AG04449 (cell line): ENCODE measurements at regions of chr5 and their contacts with region 1.

Region 1: GRCh38 chr5:43631182-43631910 is 28.4 kb downstream of the NNT start:
- DNase-seq: peak; percentile 51
- H3K4me3 ChIP-seq: no peak overlapping the region
- CTCF ChIP-seq: peak; percentile 64

Region 2: DNA sequence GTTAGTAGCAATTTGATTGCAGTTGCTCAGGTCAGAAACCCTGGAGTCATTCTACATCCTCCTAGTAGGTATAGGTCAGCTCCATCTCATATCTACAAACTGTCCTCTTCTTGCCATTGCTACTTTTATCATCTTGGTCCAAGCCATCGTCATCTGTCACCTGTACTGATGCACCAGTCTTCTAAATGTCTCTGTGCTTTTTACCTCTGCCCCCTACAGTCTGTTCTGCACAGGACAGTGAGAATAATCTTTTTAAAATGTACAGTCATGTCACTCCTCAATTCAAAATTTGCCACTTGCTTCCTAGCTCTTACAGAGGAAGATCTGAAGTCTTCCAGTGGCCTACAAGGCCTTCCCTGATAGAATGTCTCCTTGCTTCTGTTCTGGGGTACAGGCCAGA is 21.6 kb before region 1 on chr5:
- CTCF ChIA-PET with region 1: interaction called, 18 read pairs
- POLR2A ChIA-PET with region 1: no interaction called
- DNase-seq: no peak
- H3K4me3 ChIP-seq: no peak overlapping the region
- CTCF ChIP-seq: no peak

Region 3: GRCh38 chr5:43646992-43647391 is 15.6 kb after region 1 on chr5:
- CTCF ChIA-PET with region 1: interaction called, 51 read pairs
- POLR2A ChIA-PET with region 1: no interaction called
- DNase-seq: no peak
- H3K4me3 ChIP-seq: no peak overlapping the region
- CTCF ChIP-seq: no peak

Region 4: GRCh38 chr5:43729846-43730478 is 98.6 kb after region 1 on chr5:
- CTCF ChIA-PET with region 1: interaction called, 14 read pairs
- POLR2A ChIA-PET with region 1: no interaction called
- DNase-seq: no peak
- H3K4me3 ChIP-seq: no peak overlapping the region
- CTCF ChIP-seq: peak; percentile 22

Region 5: DNA sequence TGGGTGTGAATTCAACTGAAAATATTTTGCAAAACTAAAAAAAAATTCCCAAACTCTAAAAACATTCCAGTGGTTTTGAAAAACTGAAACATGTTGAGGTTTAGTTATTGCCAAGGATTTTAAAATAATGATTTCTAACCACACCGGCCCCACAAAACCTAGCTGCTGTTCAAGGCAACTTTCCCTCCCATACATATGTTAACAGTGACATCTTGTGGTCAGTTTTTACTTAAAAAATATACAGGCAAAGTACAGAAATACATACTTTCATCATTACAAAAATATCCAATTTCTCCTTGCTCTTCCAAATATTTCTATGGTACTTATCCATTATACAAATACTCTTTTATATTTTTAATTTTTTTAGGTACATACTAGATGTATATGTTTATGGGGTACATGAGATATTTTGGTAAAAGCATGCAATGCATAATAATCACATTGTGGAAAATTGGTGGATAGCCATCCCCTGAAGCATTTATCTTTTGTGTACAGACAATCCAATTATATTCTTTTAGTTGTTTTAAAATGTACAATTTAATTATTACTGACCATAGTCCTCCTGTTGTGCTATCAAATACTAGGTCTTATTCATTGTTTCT is 1143.0 kb after region 1 on chr5:
- CTCF ChIA-PET with region 1: interaction called, 26 read pairs
- POLR2A ChIA-PET with region 1: no interaction called
- DNase-seq: peak; percentile 0
- H3K4me3 ChIP-seq: no peak overlapping the region
- CTCF ChIP-seq: peak; percentile 14